ENCODE measurements at regions of chr20 and their contacts with region 1.

Region 1: DNA sequence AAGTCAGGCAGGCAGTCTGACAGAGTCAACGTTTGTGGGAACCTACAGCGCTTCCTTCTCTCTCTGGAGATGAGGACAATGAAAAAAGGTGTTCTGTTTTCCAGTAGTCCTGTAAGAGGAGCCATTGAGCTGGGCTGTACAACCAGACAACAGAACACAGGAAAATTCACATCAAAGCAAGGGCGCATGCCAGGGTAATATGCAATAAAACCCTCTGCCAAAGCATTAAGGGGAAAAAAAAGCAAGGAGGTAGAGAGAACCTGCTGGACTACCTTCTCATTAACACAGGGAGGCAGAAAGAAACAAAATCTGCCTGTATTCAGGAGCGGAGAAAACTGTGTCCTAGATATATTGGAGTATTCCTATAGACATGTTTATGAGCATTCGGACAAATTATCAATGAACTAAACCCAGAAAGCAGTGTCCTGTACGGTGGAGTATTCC is 1.3 kb downstream of the RNF24 start:
- DNase-seq: peak; percentile 66
- H3K4me3 ChIP-seq: peak overlapping the region in 2 of 3 donors; percentile 9 to 77
- H3K27ac ChIP-seq: peak overlapping the region; percentile 66 to 93 (median 69)
- H3K4me1 ChIP-seq: peaks cover 23 to 42% of the 10 kb centered on the region in 2 donors
- H3K27me3 ChIP-seq: no peaks in the 10 kb centered on the region
- CTCF ChIP-seq: peak in 4 of 6 experiments; percentile 61 to 69 (median 66)
- POLR2A ChIP-seq: no peak

Region 2: DNA sequence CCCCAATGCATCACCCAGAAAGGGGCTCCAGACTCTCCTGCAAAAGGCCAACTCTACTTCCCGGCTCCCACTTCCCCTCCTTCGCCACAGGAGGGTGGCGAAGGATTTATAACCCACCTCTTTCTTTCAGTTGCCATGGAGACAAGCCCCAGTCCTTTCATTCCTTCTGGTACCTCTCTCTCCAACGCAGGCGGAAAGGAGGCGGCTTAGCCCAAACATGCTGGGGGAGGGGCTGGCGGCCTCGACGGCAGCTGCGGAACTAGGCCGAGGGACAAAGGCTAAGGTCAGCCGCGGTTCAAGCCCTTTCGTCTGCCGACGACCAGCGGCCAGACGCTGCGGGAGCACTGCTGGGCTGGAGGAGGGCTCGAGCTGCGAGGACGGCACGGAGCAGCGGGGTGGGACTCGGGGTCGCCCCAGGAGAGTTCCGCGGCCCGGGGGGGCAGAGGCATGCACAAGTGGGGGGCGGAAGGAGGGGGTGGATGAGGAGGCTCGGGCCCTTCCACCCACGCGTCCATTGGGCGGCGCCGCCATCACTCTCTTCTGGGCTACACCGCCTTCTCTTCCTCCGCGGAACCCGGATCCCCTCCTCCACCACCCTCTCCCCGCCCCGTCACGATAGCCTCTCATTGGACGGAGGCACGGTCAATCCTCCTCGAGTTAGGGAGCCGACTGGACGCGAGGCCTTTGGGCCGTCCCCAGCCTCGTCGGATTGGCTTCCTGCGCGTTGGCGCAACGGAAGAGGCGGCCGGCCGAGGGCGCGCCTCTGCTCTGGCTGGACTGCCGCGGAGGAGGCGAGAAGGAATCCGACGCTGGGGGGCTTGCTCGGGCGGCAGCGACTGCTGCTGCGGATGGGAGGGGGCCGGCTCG is 125.2 kb before region 1 on chr20 and contains the start of gene PANK2:
- intact Hi-C with region 1: loop called (anchors 10 kb)
- DNase-seq: peak; percentile 99
- H3K4me3 ChIP-seq: peak within 1 kb of the TSS; percentile 63 to 99 (median 74)
- H3K27ac ChIP-seq: peak within 1 kb of the TSS; percentile 86 to 96 (median 93)
- H3K4me1 ChIP-seq: peaks cover 29 to 40% of the 10 kb centered on the region in 2 donors
- H3K27me3 ChIP-seq: no peaks in the 10 kb centered on the region
- CTCF ChIP-seq: peak; percentile 12 to 76 (median 52)
- POLR2A ChIP-seq: peak; percentile 73 to 96
- total RNA-seq, gene PANK2: 52.3 to 63.4 (median 61.4) TPM

Region 3: GRCh38 chr20:4067600-4068261 is 53.7 kb after region 1 on chr20:
- intact Hi-C with region 1: loop called (anchors 5 kb)
- DNase-seq: no peak
- H3K4me3 ChIP-seq: no peak overlapping the region
- H3K27ac ChIP-seq: no peak overlapping the region
- H3K4me1 ChIP-seq: peaks cover 7 to 30% of the 10 kb centered on the region in 2 donors
- H3K27me3 ChIP-seq: no peaks in the 10 kb centered on the region
- CTCF ChIP-seq: no peak
- POLR2A ChIP-seq: no peak

Region 4: GRCh38 chr20:4091490-4092479 is 77.7 kb after region 1 on chr20:
- intact Hi-C with region 1: no loop called
- DNase-seq: peak; percentile 42 to 61
- H3K4me3 ChIP-seq: no peak overlapping the region
- H3K27ac ChIP-seq: no peak overlapping the region
- H3K4me1 ChIP-seq: no peaks in the 10 kb centered on the region
- H3K27me3 ChIP-seq: no peaks in the 10 kb centered on the region
- CTCF ChIP-seq: peak; percentile 26 to 83 (median 48)
- POLR2A ChIP-seq: no peak

Measured in thyroid gland (tissue), 4 donors.